ENCODE measurements at regions of chr10 and their contacts with region 1.

Region 1: GRCh38 chr10:35563261-35563891 is 41.8 kb upstream of the GJD4 start:
- DNase-seq: peak; percentile 55 to 70
- H3K4me3 ChIP-seq: no peak overlapping the region
- H3K27ac ChIP-seq: no peak overlapping the region
- H3K4me1 ChIP-seq: peaks cover 0 to 14% of the 10 kb centered on the region in 2 donors
- H3K27me3 ChIP-seq: no peaks in the 10 kb centered on the region
- CTCF ChIP-seq: peak; percentile 82 to 99 (median 93)
- POLR2A ChIP-seq: no peak

Region 2: GRCh38 chr10:35246770-35247343 is 316.5 kb before region 1 on chr10:
- intact Hi-C with region 1: loop called (anchors 10 kb)
- DNase-seq: no peak
- H3K4me3 ChIP-seq: no peak overlapping the region
- H3K27ac ChIP-seq: no peak overlapping the region
- H3K4me1 ChIP-seq: no peaks in the 10 kb centered on the region
- H3K27me3 ChIP-seq: no peaks in the 10 kb centered on the region
- CTCF ChIP-seq: no peak
- POLR2A ChIP-seq: no peak

Region 3: DNA sequence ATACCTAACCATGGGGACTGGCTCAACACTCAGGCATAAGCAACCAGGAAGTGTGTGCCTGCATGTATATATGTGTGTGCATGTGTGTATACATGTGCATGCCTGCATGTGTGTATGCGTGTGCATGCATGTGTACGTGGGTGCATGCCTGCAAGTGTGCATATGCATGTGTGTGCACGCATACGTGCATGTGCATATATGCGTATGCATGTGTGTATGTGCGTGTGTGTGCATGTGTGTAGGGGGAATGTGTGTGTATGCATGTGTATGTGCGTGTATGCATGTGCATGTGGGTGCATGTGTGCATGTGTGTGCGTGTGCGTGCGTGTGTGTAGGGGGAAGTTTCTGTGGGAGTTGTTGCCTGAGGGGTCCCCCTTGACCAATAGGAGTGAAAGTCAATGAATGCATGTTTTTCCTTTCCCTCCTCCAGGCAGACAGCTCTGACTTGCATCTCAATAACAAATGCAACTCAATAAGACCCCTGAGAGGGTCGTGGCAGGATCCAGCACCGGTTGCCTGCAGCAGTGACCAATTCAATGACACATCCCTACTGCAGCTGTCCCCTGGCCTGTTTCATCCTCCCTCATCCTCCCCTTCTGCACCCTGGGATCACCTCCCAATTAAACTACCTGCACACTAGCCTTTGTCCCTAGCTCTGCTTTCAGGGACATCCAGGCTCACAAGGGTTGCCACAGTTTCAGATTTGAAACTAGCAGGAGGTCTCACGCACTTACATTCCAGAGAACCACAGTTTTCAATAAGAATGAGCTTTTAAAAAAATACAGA is 105.7 kb after region 1 on chr10:
- intact Hi-C with region 1: no loop called
- DNase-seq: no peak
- H3K4me3 ChIP-seq: no peak overlapping the region
- H3K27ac ChIP-seq: no peak overlapping the region
- H3K4me1 ChIP-seq: no peaks in the 10 kb centered on the region
- H3K27me3 ChIP-seq: no peaks in the 10 kb centered on the region
- CTCF ChIP-seq: no peak
- POLR2A ChIP-seq: no peak

Region 4: DNA sequence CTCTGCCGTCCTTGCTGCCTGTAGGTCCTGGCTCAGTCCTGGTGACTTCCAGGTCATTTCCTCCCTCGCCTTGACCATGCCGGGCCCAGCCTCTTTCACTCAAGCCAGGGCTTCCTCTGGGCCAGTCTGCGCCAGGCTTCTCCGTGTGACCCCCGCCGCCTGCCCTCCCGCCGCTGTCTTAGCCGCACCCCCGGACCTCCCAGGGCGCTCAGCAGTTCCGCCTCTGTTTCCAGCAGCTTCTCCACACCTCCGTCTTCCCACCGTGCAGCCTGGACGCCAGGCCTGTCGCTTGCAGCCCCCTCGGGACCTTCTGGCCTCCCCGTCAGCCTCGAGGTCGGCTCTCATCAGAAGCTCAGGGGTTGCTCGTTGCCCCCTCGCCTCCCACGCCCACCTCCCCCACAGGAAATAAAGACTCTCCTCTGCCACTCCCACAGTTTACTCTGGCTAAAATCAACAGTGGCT is 201.7 kb after region 1 on chr10:
- intact Hi-C with region 1: no loop called
- DNase-seq: peak; percentile 6 to 8
- H3K4me3 ChIP-seq: no peak overlapping the region
- H3K27ac ChIP-seq: no peak overlapping the region
- H3K4me1 ChIP-seq: no peaks in the 10 kb centered on the region
- H3K27me3 ChIP-seq: no peaks in the 10 kb centered on the region
- CTCF ChIP-seq: no peak
- POLR2A ChIP-seq: no peak

Region 5: DNA sequence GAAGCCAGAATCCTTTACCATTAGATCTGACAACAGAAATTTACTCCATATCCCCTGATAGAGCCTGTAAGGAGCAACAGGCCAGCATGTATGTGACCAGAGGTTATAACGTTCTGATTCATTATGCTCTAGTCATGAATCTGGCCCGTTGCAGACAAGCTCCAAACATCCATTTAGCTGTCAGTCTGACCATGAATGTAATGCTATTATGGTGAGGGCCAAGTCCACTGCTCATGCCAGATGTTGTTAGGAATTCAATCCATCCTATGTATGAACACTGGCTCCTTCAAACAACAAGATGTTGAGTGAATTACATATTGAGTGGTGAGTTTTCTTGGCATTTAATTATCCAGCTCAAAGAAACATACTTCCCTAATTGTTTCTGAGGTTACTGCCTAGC is 951.9 kb after region 1 on chr10:
- intact Hi-C with region 1: no loop called
- DNase-seq: no peak
- H3K4me3 ChIP-seq: no peak overlapping the region
- H3K27ac ChIP-seq: no peak overlapping the region
- H3K4me1 ChIP-seq: no peaks in the 10 kb centered on the region
- H3K27me3 ChIP-seq: no peaks in the 10 kb centered on the region
- CTCF ChIP-seq: no peak
- POLR2A ChIP-seq: no peak